ENCODE measurements at regions of chr13 and their contacts with region 1.

Region 1: GRCh38 chr13:71998223-71998622 is 131.2 kb upstream of the DACH1 start:
- DNase-seq: no peak
- ATAC-seq: no peak
- H3K4me3 ChIP-seq: no peak overlapping the region
- H3K27ac ChIP-seq: no peak overlapping the region
- H3K4me1 ChIP-seq: no peaks in the 10 kb centered on the region
- H3K27me3 ChIP-seq: no peaks in the 10 kb centered on the region
- CTCF ChIP-seq: no peak

Region 2: DNA sequence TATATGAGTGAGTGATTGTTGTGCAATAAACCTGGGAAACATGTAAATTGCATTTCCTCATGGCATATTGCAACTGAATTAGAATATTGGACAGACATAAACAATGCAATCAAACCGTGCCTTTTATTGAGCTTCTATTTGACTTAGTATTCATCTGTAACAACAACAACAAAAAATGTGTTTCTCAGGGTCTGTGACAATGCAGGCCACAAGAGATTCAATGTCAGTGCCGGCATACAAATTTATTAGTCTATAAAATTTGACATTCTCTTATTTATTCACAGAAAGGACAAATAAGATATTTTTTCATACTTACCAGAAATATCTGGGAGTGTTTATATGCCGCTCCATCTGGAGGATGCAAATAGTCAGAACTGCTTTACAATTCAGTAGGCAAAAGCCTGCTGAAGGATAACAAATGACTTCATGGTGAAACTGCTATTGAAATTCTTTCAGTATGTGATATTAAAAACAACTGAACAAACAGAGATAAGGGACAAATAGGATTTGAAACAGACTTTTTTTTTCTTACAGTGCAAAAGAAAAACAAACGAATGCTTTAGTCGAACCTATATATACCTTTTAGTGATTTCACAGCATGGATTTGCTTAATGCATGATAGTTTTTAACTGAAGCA is 208.4 kb before region 1 on chr13:
- CTCF ChIA-PET with region 1: no interaction called
- POLR2A ChIA-PET with region 1: no interaction called
- in situ Hi-C with region 1: no loop called
- intact Hi-C with region 1: loop called (anchors 10 kb)
- DNase-seq: no peak
- ATAC-seq: no peak
- H3K4me3 ChIP-seq: no peak overlapping the region
- H3K27ac ChIP-seq: no peak overlapping the region
- H3K4me1 ChIP-seq: no peaks in the 10 kb centered on the region
- H3K27me3 ChIP-seq: no peaks in the 10 kb centered on the region
- CTCF ChIP-seq: no peak

Region 3: GRCh38 chr13:71949441-71949840 is 48.8 kb before region 1 on chr13:
- CTCF ChIA-PET with region 1: no interaction called
- POLR2A ChIA-PET with region 1: no interaction called
- in situ Hi-C with region 1: no loop called
- intact Hi-C with region 1: no loop called
- DNase-seq: no peak
- ATAC-seq: no peak
- H3K4me3 ChIP-seq: no peak overlapping the region
- H3K27ac ChIP-seq: no peak overlapping the region
- H3K4me1 ChIP-seq: no peaks in the 10 kb centered on the region
- H3K27me3 ChIP-seq: no peaks in the 10 kb centered on the region
- CTCF ChIP-seq: no peak

Region 4: GRCh38 chr13:71967990-71968389 is 30.2 kb before region 1 on chr13:
- CTCF ChIA-PET with region 1: no interaction called
- POLR2A ChIA-PET with region 1: no interaction called
- in situ Hi-C with region 1: no loop called
- intact Hi-C with region 1: no loop called
- DNase-seq: no peak
- ATAC-seq: no peak
- H3K4me3 ChIP-seq: no peak overlapping the region
- H3K27ac ChIP-seq: no peak overlapping the region
- H3K4me1 ChIP-seq: no peaks in the 10 kb centered on the region
- H3K27me3 ChIP-seq: no peaks in the 10 kb centered on the region
- CTCF ChIP-seq: no peak

Measured in Panc1 (cell line).